Dorsolateral prefrontal cortex (tissue), 120 donors: ENCODE measurements at regions of chr2 and their contacts with region 1.

Region 1: GRCh38 chr2:207459990-207460757 is 69.6 kb upstream of the CREB1 start:
- DNase-seq: no peak
- H3K4me3 ChIP-seq: no peak overlapping the region
- H3K27ac ChIP-seq: no peak overlapping the region
- H3K27me3 ChIP-seq: no peaks in the 10 kb centered on the region
- CTCF ChIP-seq: no peak

Region 2: DNA sequence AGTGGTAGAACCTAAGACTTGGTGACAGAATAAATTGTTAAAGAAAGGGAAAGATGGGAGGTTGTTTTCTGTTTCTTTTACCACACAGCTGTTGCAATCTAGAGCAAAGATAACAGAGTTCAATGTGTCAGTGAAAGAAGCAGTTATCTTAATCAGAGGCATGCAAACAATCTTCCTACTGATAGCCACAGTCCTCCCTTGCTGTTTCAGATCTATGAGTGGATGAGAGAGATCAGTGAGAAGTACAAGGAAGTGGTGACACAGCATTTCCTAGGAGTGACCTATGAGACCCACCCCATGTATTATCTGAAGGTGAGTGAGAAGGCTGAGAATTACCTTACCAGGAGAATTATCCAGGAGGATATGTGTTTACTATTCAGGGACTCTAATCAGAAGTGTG is 504.9 kb before region 1 on chr2:
- intact Hi-C with region 1: no loop called
- DNase-seq: no peak
- H3K4me3 ChIP-seq: no peak overlapping the region
- H3K27ac ChIP-seq: no peak overlapping the region
- H3K27me3 ChIP-seq: no peaks in the 10 kb centered on the region
- CTCF ChIP-seq: no peak

Region 3: GRCh38 chr2:207334624-207335371 is 125.4 kb before region 1 on chr2:
- intact Hi-C with region 1: loop called in 1 of 2 experiments (anchors 5 kb)
- DNase-seq: peak in 3 of 10 donors; percentile 21 to 62 (median 43)
- H3K4me3 ChIP-seq: peak overlapping the region in 51 of 59 donors; percentile 4 to 56 (median 34)
- H3K27ac ChIP-seq: peak overlapping the region in 39 of 59 donors; percentile 6 to 81 (median 49)
- H3K27me3 ChIP-seq: no peaks in the 10 kb centered on the region
- CTCF ChIP-seq: peak in 1 of 56 donors; percentile 11